PC-9 (cell line): ENCODE measurements at regions of chr1 and their contacts with region 1.

Region 1: DNA sequence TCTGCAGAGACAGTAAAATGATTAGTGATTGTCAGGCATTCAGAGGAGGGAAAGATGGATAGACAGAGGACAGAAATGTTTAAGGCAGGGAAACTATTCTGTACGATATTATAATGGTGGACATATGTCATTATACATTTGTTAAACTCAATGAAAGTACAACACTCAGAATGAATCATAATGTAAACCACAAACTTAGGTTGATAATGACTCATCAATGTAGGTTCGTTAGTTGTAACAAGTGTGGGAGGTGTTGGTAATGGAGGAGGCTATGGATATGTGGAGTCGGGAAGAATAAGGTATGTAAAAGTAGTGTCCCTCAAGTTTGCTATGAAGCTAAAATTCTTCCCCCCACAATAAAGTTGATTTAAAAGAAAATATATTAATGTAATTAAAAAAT is 455.0 kb downstream of the BRINP3 start:
- DNase-seq: peak in 1 of 2 experiments; percentile 74
- H3K4me3 ChIP-seq: no peak overlapping the region
- H3K27ac ChIP-seq: no peak overlapping the region
- H3K4me1 ChIP-seq: 0 out of 2 replicates have a peak, but pooled peaks cover 9% of the 10 kb centered on the region
- H3K27me3 ChIP-seq: no peaks in the 10 kb centered on the region
- CTCF ChIP-seq: no peak

Region 2: GRCh38 chr1:189970319-189971249 is 52.1 kb before region 1 on chr1:
- CTCF ChIA-PET with region 1: no interaction called
- POLR2A ChIA-PET with region 1: no interaction called
- intact Hi-C with region 1: loop called (anchors 5 kb)
- DNase-seq: peak in 1 of 2 experiments; percentile 4
- H3K4me3 ChIP-seq: no peak overlapping the region
- H3K27ac ChIP-seq: peak overlapping the region; percentile 65
- H3K4me1 ChIP-seq: peaks cover 14% of the 10 kb centered on the region
- H3K27me3 ChIP-seq: no peaks in the 10 kb centered on the region
- CTCF ChIP-seq: no peak

Region 3: GRCh38 chr1:190067592-190067991 is 44.9 kb after region 1 on chr1:
- CTCF ChIA-PET with region 1: no interaction called
- POLR2A ChIA-PET with region 1: interaction called, 17 read pairs
- intact Hi-C with region 1: no loop called
- DNase-seq: no peak
- H3K4me3 ChIP-seq: no peak overlapping the region
- H3K27ac ChIP-seq: no peak overlapping the region
- H3K4me1 ChIP-seq: no peaks in the 10 kb centered on the region
- H3K27me3 ChIP-seq: no peaks in the 10 kb centered on the region
- CTCF ChIP-seq: no peak